Breast epithelium (tissue), 4 donors: ENCODE measurements at regions of chr10 and their contacts with region 1.

Region 1: GRCh38 chr10:131846240-131847101 is 54.3 kb upstream of the PPP2R2D start:
- DNase-seq: peak in 1 of 2 donors; percentile 42
- H3K4me3 ChIP-seq: no peak overlapping the region
- H3K27ac ChIP-seq: no peak overlapping the region
- H3K4me1 ChIP-seq: no peaks in the 10 kb centered on the region
- H3K27me3 ChIP-seq: peaks cover 0 to 4% of the 10 kb centered on the region in 2 donors
- CTCF ChIP-seq: no peak
- POLR2A ChIP-seq: no peak

Region 2: GRCh38 chr10:131797626-131798025 is 48.8 kb before region 1 on chr10:
- intact Hi-C with region 1: loop called (anchors 2 kb)
- DNase-seq: no peak
- H3K4me3 ChIP-seq: no peak overlapping the region
- H3K27ac ChIP-seq: no peak overlapping the region
- H3K4me1 ChIP-seq: no peaks in the 10 kb centered on the region
- H3K27me3 ChIP-seq: peaks cover 0 to 2% of the 10 kb centered on the region in 2 donors
- CTCF ChIP-seq: no peak
- POLR2A ChIP-seq: no peak

Region 3: GRCh38 chr10:132335189-132336063 is 489.0 kb after region 1 on chr10:
- intact Hi-C with region 1: no loop called
- DNase-seq: no peak
- H3K4me3 ChIP-seq: no peak overlapping the region
- H3K27ac ChIP-seq: no peak overlapping the region
- H3K4me1 ChIP-seq: peaks cover 0 to 6% of the 10 kb centered on the region in 2 donors
- H3K27me3 ChIP-seq: no peaks in the 10 kb centered on the region
- CTCF ChIP-seq: no peak
- POLR2A ChIP-seq: no peak

Region 4: DNA sequence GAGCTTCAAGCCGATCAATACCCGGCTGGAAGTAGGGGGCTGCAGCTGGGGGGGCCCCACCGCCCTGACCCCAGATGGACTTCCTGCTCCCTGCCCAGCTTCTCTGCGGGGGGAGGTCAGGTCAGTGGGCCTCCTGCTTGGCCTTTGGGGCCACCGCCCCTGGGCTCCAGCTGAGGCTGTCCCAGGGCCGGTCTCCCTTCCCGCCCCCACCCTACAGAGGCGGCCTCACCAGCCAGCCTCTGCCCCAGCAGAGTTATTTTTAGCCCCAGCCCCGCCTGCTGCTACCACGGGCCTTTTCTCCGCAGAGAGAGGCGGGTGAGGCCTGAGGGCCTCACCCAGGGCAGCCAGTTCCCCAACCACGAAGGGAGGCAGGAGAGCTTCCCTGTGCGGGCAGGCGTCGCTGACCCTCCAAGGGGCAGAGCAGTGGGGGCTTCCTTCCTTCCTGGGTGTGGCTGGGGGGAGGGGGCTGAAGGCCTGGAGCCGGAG is 575.0 kb after region 1 on chr10:
- intact Hi-C with region 1: no loop called
- DNase-seq: peak in 1 of 2 donors; percentile 64
- H3K4me3 ChIP-seq: peak overlapping the region in 1 of 3 donors; percentile 31
- H3K27ac ChIP-seq: peak overlapping the region; percentile 86 to 90
- H3K4me1 ChIP-seq: peaks cover 0 to 24% of the 10 kb centered on the region in 2 donors
- H3K27me3 ChIP-seq: no peaks in the 10 kb centered on the region
- CTCF ChIP-seq: no peak
- POLR2A ChIP-seq: no peak